Activated T-helper 1 cell treated with anti-CD3 and anti-CD28 coated beads, Interleukin-12 subunit alpha, Interleukin-12 subunit beta, Interleukin-2, Interleukin-4 antibody, amounts not matched to agents 30 ng/mL and 10 ng/mL and 1 ng/mL, durations not matched to agents 14 hours and 24 hours and 36 hours (primary cell): ENCODE measurements at regions of chr7 and their contacts with region 1.

Region 1: DNA sequence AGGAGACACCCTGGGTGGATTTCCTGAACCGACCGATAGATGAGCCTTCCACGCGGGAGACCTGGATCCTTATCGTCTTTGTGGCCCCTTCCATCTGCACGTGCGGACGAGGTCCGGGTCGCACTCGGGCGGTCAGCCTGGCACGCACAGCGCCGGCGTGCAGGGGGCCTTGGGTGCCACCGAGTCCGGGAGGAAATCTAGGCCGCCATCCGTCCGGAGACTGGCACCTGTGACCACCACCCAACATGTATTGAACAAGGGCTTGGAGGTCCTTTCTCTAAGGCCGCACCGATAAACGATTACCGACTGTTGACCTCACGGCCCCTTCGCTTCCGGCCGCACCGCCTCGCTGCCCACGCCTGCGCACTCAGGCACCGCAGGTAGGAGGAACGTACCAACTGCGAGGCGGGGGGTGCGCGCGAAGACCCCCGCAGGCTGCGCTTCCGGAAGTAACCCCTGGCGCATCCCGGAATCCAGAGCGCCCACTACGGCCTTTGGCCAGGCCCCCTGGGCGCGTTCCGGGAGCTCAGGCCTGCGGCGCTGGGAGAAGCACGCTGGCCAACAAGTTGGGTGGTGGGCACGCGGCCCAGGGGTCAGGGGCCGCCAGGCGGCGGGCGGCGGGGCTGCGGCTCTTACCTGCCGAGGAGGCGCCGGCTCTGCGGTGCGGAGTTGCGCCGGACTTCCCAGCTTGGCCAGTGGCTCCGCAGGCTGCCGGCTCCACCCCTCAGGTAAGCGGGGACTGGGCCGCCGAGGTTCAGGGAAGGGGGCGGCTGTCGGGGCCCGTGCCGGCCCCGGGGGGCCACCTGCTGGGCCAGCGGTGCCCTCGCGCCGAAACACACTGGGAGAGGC is at the starts of genes ACTR3C and LRRC61:
- DNase-seq: peak; percentile 64
- H3K4me3 Mint-ChIP-seq: peak within 1 kb of the TSS; percentile 97
- H3K27ac Mint-ChIP-seq: peak within 1 kb of the TSS; percentile 99
- H3K4me1 Mint-ChIP-seq: peaks cover 62% of the 10 kb centered on the region
- H3K27me3 Mint-ChIP-seq: no peaks in the 10 kb centered on the region
- total RNA-seq, gene ACTR3C: 8.2 and 9.8 TPM in 2 replicates
- total RNA-seq, gene LRRC61: 24.9 and 26.1 TPM in 2 replicates

Region 2: DNA sequence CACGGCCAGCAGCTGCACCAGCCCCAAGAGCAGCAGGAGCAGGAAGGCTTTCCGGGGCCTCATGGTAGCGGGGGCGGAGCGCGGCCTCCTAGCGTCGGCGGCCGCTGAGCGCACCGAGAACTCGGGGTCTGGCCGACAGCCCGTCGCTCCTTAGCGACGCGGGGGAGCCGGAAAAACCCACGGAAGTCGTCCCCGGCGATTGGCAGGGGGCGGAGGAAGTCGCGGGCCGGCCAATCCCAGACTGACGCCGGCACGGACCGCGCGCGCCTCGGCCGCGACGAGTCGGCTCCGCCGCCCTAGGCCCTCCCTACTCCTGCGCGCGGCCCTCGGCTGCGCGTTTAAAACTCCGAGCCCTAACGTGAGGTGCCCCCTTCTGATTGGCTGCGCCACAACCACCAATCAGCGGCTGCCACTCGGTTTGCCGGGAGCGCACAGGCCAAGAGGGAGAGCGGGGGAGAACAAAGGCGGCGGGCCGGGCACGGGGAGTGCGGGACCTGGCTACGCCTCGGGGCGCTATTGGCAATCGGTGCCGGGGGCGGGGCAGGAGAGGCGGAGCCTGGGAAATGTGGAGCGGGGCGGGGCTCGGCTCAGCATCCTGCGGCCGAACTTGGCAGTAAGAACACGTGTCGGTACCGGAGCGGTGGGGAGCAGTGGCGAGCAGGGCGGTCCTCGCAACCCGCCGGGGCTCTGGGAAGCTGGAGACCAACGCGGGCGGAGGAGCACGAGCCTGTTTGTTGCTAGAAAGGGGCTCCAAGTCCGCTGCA is 1294.5 kb before region 1 on chr7 and contains the start of gene PDIA4:
- intact Hi-C with region 1: loop called (anchors 2 kb)
- DNase-seq: peak; percentile 100
- H3K4me3 Mint-ChIP-seq: peak within 1 kb of the TSS; percentile 98
- H3K27ac Mint-ChIP-seq: peak within 1 kb of the TSS; percentile 93
- H3K4me1 Mint-ChIP-seq: peaks cover 34% of the 10 kb centered on the region
- H3K27me3 Mint-ChIP-seq: peaks cover 2% of the 10 kb centered on the region
- total RNA-seq, gene PDIA4: 132 and 142 TPM in 2 replicates

Region 3: GRCh38 chr7:150356265-150356897 is 33.3 kb after region 1 on chr7:
- intact Hi-C with region 1: loop called (anchors 1 kb)
- DNase-seq: no peak
- H3K4me3 Mint-ChIP-seq: no peak overlapping the region
- H3K27ac Mint-ChIP-seq: no peak overlapping the region
- H3K4me1 Mint-ChIP-seq: peaks cover 44% of the 10 kb centered on the region
- H3K27me3 Mint-ChIP-seq: peaks cover 8% of the 10 kb centered on the region

Region 4: DNA sequence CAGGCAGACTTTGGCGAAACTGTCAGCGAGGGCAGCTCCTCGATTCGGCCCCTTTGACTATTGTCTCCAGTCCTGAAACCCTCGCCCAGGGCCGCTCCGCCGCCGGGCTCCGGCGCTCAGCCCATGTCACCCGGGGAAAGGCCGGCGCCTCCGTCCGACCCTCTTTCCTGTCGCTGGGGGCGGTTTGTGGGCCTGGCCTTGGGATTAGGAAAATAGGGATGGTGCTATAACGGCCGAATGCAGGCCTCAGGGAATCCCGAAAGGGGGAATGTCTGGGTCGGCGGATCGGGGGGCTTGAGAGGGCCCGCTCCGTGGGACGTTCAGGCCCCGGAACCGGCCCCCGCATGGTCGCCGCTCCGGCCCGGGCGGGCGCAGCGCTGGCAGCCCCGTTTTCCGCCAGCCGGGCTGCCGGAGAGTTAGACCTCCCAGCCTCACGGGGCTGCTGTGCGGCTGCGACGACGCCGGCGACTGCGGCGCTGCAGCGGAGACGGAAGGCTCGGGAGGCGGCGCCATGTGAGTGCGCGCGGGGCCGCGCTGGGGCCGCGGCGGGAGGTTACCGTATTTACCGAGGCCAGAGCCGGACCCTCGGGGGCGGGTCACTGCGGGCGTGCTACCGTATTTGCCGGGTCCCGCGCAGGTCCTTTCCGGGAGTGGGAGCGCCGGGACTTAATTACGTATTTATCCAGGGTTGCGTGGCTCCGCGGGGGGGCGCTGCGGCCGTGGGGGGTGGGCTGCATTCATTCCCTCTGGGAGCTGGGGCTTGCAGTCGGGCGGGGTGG is 81.9 kb after region 1 on chr7:
- intact Hi-C with region 1: loop called (anchors 1 kb)
- DNase-seq: peak; percentile 79
- H3K4me3 Mint-ChIP-seq: peak overlapping the region; percentile 95
- H3K27ac Mint-ChIP-seq: peak overlapping the region; percentile 95
- H3K4me1 Mint-ChIP-seq: peaks cover 57% of the 10 kb centered on the region
- H3K27me3 Mint-ChIP-seq: no peaks in the 10 kb centered on the region

Region 5: DNA sequence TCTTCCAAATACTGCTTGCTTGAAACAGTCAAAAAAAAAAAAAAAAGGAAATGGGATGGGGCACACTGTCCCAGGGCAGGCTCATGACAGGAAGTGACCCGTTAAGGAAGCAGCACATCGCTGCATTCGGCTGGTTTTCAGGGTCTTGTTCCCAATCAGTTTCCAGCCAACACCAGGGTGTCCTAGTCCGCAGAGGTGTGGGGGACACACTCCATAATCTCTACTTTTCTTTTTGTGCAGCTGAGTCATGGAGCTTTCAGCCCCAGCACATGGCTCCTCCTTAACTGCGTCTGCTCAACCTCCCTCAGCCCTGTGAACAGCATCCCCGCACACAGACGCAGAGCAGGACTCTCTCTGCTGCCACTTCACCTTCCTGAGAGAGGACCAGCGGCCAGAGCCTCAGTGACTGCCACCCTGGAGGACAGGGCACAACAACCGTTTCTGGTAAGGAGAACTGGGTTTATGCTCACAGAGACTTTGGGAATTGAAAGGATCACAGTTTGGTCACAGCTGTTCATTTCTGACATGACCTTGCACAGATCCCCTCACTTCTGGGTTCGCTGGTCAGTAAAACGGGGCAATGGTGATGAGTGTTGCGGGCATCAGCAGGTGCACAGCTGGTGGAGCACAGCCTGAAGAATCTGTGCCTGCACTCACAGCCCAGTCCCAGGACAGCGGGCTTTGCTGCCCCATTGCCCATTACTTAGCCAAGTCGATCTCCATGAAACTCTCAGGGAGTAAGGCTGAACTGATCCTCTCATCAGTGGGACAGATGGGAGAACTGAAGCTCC is 414.4 kb after region 1 on chr7 and contains the start of gene GIMAP5:
- intact Hi-C with region 1: loop called (anchors 5 kb)
- DNase-seq: peak; percentile 51
- H3K4me3 Mint-ChIP-seq: peak within 1 kb of the TSS; percentile 97
- H3K27ac Mint-ChIP-seq: peak within 1 kb of the TSS; percentile 99
- H3K4me1 Mint-ChIP-seq: peaks cover 88% of the 10 kb centered on the region
- H3K27me3 Mint-ChIP-seq: no peaks in the 10 kb centered on the region
- total RNA-seq, gene GIMAP5: 53.8 and 59.7 TPM in 2 replicates

Region 6: GRCh38 chr7:151080522-151081169 is 757.6 kb after region 1 on chr7 and contains the start of gene FASTK:
- intact Hi-C with region 1: loop called (anchors 5 kb)
- DNase-seq: peak; percentile 88
- H3K4me3 Mint-ChIP-seq: peak within 1 kb of the TSS; percentile 95
- H3K27ac Mint-ChIP-seq: peak within 1 kb of the TSS; percentile 88
- H3K4me1 Mint-ChIP-seq: peaks cover 42% of the 10 kb centered on the region
- H3K27me3 Mint-ChIP-seq: peaks cover 10% of the 10 kb centered on the region
- total RNA-seq, gene FASTK: 92.6 and 96.3 TPM in 2 replicates